CD4-positive, alpha-beta memory T cell (primary cell): ENCODE measurements at regions of chr12 and their contacts with region 1.

Region 1: GRCh38 chr12:47742253-47742825 is 16.3 kb downstream of the RAPGEF3 start:
- DNase-seq: peak; percentile 58 to 67 (median 61)
- H3K4me3 ChIP-seq: no peak overlapping the region
- H3K4me3 Mint-ChIP-seq: peak overlapping the region in 2 of 8 donors; percentile 24 to 59
- H3K27ac ChIP-seq: no peak overlapping the region
- H3K27ac Mint-ChIP-seq: peak overlapping the region in 6 of 7 donors; percentile 20 to 72 (median 36)
- H3K4me1 ChIP-seq: peaks cover 29% of the 10 kb centered on the region
- H3K4me1 Mint-ChIP-seq: peaks cover 19 to 55% (median 40%) of the 10 kb centered on the region in 4 donors
- H3K27me3 ChIP-seq: no peaks in the 10 kb centered on the region
- H3K27me3 Mint-ChIP-seq: peaks cover 0 to 3% of the 10 kb centered on the region in 2 donors

Region 2: GRCh38 chr12:47458270-47458669 is 284.1 kb before region 1 on chr12:
- CTCF ChIA-PET with region 1: no interaction called
- POLR2A ChIA-PET with region 1: no interaction called
- intact Hi-C with region 1: no loop called
- DNase-seq: no peak
- H3K4me3 ChIP-seq: no peak overlapping the region
- H3K4me3 Mint-ChIP-seq: no peak overlapping the region
- H3K27ac ChIP-seq: no peak overlapping the region
- H3K27ac Mint-ChIP-seq: no peak overlapping the region
- H3K4me1 ChIP-seq: no peaks in the 10 kb centered on the region
- H3K4me1 Mint-ChIP-seq: no peaks in the 10 kb centered on the region
- H3K27me3 ChIP-seq: no peaks in the 10 kb centered on the region
- H3K27me3 Mint-ChIP-seq: peaks cover 10 to 22% of the 10 kb centered on the region in 2 donors

Region 3: GRCh38 chr12:47705566-47706425 is 36.5 kb before region 1 on chr12 and contains the start of gene RPAP3:
- CTCF ChIA-PET with region 1: interaction called, 26 read pairs
- POLR2A ChIA-PET with region 1: interaction called, 4 read pairs
- intact Hi-C with region 1: no loop called
- DNase-seq: peak; percentile 93 to 96 (median 93)
- H3K4me3 ChIP-seq: peak within 1 kb of the TSS; percentile 60 to 70
- H3K4me3 Mint-ChIP-seq: peak within 1 kb of the TSS; percentile 95 to 100 (median 98)
- H3K27ac ChIP-seq: peak within 1 kb of the TSS; percentile 81
- H3K27ac Mint-ChIP-seq: peak within 1 kb of the TSS; percentile 93 to 99 (median 97)
- H3K4me1 ChIP-seq: peaks cover 54% of the 10 kb centered on the region
- H3K4me1 Mint-ChIP-seq: peaks cover 35 to 56% (median 47%) of the 10 kb centered on the region in 4 donors
- H3K27me3 ChIP-seq: no peaks in the 10 kb centered on the region
- H3K27me3 Mint-ChIP-seq: no peaks in the 10 kb centered on the region
- total RNA-seq, gene RPAP3: 40.8 to 41.8 TPM

Region 4: GRCh38 chr12:47758834-47759690 is 16.7 kb after region 1 on chr12 and contains the start of gene RAPGEF3:
- CTCF ChIA-PET with region 1: interaction called, 270 read pairs
- POLR2A ChIA-PET with region 1: interaction called, 9 read pairs
- intact Hi-C with region 1: loop called (anchors 2 kb)
- DNase-seq: peak; percentile 50 to 78 (median 63)
- H3K4me3 ChIP-seq: peak within 1 kb of the TSS; percentile 42 to 52
- H3K4me3 Mint-ChIP-seq: peak within 1 kb of the TSS; percentile 72 to 83 (median 80)
- H3K27ac ChIP-seq: peak within 1 kb of the TSS; percentile 55
- H3K27ac Mint-ChIP-seq: peak within 1 kb of the TSS in 6 of 7 donors; percentile 12 to 74 (median 45)
- H3K4me1 ChIP-seq: peaks cover 40% of the 10 kb centered on the region
- H3K4me1 Mint-ChIP-seq: peaks cover 18 to 27% (median 23%) of the 10 kb centered on the region in 4 donors
- H3K27me3 ChIP-seq: no peaks in the 10 kb centered on the region
- H3K27me3 Mint-ChIP-seq: no peaks in the 10 kb centered on the region
- total RNA-seq, gene RAPGEF3: 0.15 to 0.39 TPM

Region 5: DNA sequence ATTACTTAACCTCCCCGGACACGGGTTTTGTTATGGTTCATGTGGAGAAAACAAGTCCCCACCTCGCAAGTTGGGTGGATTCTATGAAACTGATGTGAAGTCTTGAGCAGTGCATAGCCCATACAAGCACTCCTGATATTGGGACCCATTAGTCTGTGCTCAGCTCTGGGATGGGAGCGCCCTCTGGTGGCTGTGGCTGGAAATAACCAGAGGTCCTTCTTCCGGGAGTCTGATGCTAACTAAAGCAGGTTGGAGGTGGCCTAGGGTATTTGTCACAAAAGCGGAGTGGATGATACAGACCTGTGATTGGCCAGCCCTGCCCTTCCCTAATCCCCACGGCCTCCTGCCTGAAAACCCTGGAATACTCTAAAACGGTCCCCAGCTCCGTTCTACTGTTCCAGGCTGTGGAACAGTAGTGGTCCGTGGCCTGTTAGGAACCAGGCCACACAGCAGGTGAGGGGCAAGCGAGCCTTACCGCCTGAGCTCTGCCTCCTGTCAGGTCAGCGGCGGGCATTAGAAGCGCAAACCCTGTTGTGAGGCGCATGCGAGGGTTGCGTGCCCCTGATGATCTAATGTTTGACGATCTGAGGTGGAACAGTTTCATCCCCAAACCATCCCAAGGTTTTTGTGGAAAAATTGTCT is 37.1 kb after region 1 on chr12:
- CTCF ChIA-PET with region 1: interaction called, 671 read pairs
- POLR2A ChIA-PET with region 1: interaction called, 5 read pairs
- intact Hi-C with region 1: loop called (anchors 1 kb)
- DNase-seq: peak; percentile 84 to 87 (median 86)
- H3K4me3 ChIP-seq: no peak overlapping the region
- H3K4me3 Mint-ChIP-seq: peak overlapping the region in 1 of 8 donors; percentile 12
- H3K27ac ChIP-seq: no peak overlapping the region
- H3K27ac Mint-ChIP-seq: peak overlapping the region in 4 of 7 donors; percentile 3 to 83 (median 81)
- H3K4me1 ChIP-seq: peaks cover 7% of the 10 kb centered on the region
- H3K4me1 Mint-ChIP-seq: peaks cover 7 to 24% (median 12%) of the 10 kb centered on the region in 4 donors
- H3K27me3 ChIP-seq: no peaks in the 10 kb centered on the region
- H3K27me3 Mint-ChIP-seq: no peaks in the 10 kb centered on the region

Region 6: GRCh38 chr12:47797441-47797840 is 55.1 kb after region 1 on chr12:
- CTCF ChIA-PET with region 1: interaction called, 15 read pairs
- POLR2A ChIA-PET with region 1: no interaction called
- intact Hi-C with region 1: no loop called
- DNase-seq: peak in 2 of 5 donors; percentile 20 to 21
- H3K4me3 ChIP-seq: no peak overlapping the region
- H3K4me3 Mint-ChIP-seq: no peak overlapping the region
- H3K27ac ChIP-seq: no peak overlapping the region
- H3K27ac Mint-ChIP-seq: peak overlapping the region in 3 of 7 donors; percentile 56 to 80 (median 73)
- H3K4me1 ChIP-seq: peaks cover 26% of the 10 kb centered on the region
- H3K4me1 Mint-ChIP-seq: peaks cover 15 to 32% (median 23%) of the 10 kb centered on the region in 4 donors
- H3K27me3 ChIP-seq: no peaks in the 10 kb centered on the region
- H3K27me3 Mint-ChIP-seq: no peaks in the 10 kb centered on the region

Region 7: GRCh38 chr12:47828608-47829536 is 86.5 kb after region 1 on chr12:
- CTCF ChIA-PET with region 1: interaction called, 533 read pairs
- POLR2A ChIA-PET with region 1: interaction called, 25 read pairs
- intact Hi-C with region 1: no loop called
- DNase-seq: no peak
- H3K4me3 ChIP-seq: no peak overlapping the region
- H3K4me3 Mint-ChIP-seq: peak overlapping the region in 4 of 8 donors; percentile 20 to 62 (median 48)
- H3K27ac ChIP-seq: peak overlapping the region; percentile 26
- H3K27ac Mint-ChIP-seq: peak overlapping the region; percentile 72 to 92 (median 83)
- H3K4me1 ChIP-seq: peaks cover 97% of the 10 kb centered on the region
- H3K4me1 Mint-ChIP-seq: peaks cover 49 to 93% (median 78%) of the 10 kb centered on the region in 4 donors
- H3K27me3 ChIP-seq: no peaks in the 10 kb centered on the region
- H3K27me3 Mint-ChIP-seq: no peaks in the 10 kb centered on the region